Posterior vena cava (tissue), 2 donors: ENCODE measurements at regions of chr15 and their contacts with region 1.

Region 1: GRCh38 chr15:74540761-74541493 is at the start of gene ARID3B:
- DNase-seq: peak; percentile 99
- total RNA-seq, gene ARID3B: 4.2 to 4.9 TPM

Region 2: GRCh38 chr15:73240866-73241499 is 1299.9 kb before region 1 on chr15:
- intact Hi-C with region 1: no loop called
- DNase-seq: no peak

Region 3: GRCh38 chr15:74307827-74308644 is 232.9 kb before region 1 on chr15:
- intact Hi-C with region 1: no loop called
- DNase-seq: no peak

Region 4: DNA sequence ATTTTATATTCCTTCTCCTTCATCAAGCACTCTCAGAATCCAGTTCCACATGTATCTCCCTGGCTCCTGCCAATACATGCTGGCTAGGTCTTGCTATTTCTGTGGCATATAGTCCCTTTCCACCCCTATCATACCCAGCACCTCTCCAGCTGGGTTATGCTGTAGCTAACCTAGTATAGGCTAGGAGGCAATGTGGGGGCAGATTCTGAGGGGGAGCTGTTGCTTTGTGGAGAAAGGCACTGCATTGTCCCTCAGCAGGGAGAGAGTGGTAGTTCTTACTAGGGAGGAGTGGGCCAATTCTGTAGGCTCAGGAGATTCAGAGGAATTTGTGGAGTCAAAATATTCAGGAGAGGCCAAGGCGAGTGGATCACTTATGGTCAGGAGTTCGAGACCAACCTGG is 40.5 kb before region 1 on chr15:
- intact Hi-C with region 1: loop called in 1 of 2 experiments (anchors 1 kb)
- DNase-seq: no peak

Region 5: DNA sequence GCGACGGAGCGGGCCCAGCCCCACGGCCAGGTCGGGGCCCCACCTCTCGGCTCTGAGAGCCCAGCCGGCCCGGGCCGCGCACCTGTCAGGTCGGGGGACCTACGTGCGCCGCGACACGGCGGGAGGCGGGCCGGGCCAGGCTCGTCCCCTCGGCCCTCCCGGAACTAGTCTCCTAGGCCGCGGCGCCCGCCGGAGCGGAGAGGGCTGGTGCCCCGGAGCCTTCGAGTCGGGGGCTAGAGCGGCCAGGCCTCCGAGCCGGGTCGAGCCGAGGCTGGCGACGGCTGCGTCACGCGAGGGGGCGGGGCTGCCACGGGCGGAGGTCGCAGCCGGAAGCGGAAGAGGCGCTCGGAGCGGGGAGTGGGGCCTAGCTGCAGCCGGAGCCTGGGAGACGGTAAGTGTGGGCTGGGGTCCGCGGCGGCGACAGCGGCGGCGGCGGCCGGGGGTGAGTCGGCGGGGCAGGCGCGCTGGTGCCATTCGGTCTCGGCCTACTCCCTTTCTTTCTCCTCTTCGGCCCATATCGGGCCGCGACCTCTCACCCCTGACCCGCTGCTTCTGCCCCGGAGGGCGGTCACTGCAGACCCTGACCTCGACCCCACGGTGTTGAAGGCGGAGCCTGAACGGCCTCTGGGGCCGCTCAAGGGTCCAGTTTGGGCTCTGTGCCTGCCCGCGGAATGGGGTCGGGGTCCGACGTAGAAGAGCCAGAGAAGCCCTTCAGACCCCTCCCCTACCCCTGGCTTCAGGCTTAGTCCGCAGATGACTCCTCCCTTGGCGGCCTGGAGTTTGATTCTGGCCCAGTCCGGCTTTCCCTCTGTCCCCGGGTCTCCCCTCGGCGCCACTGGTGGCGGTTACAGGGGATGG is 74.8 kb after region 1 on chr15 and contains the start of gene CLK3:
- intact Hi-C with region 1: loop called (anchors 5 to 10 kb)
- DNase-seq: peak; percentile 99
- total RNA-seq, gene CLK3: 37.7 to 42.3 TPM